ENCODE measurements at regions of chr5 and their contacts with region 1.

Region 1: GRCh38 chr5:142874537-142874936 is 104.4 kb downstream of the ARHGAP26 start:
- DNase-seq: peak in 1 of 2 donors; percentile 36
- ATAC-seq: peak; percentile 54 to 61
- H3K4me3 ChIP-seq: no peak overlapping the region
- H3K27ac ChIP-seq: peak overlapping the region in 3 of 4 donors; percentile 5 to 38 (median 23)
- H3K4me1 ChIP-seq: peaks cover 5 to 21% of the 10 kb centered on the region in 2 donors
- H3K27me3 ChIP-seq: no peaks in the 10 kb centered on the region
- CTCF ChIP-seq: no peak
- POLR2A ChIP-seq: no peak

Region 2: GRCh38 chr5:142726188-142726731 is 148.3 kb before region 1 on chr5:
- in situ Hi-C with region 1: loop called in 1 of 4 experiments (anchors 10 kb)
- intact Hi-C with region 1: no loop called
- DNase-seq: no peak
- ATAC-seq: peak; percentile 92 to 93
- H3K4me3 ChIP-seq: no peak overlapping the region
- H3K27ac ChIP-seq: peak overlapping the region in 3 of 4 donors; percentile 21 to 44 (median 23)
- H3K4me1 ChIP-seq: peaks cover 2 to 14% of the 10 kb centered on the region in 2 donors
- H3K27me3 ChIP-seq: no peaks in the 10 kb centered on the region
- CTCF ChIP-seq: no peak
- POLR2A ChIP-seq: no peak

Region 3: GRCh38 chr5:142748568-142749249 is 125.8 kb before region 1 on chr5:
- in situ Hi-C with region 1: loop called (anchors 10 kb)
- intact Hi-C with region 1: no loop called
- DNase-seq: peak in 1 of 2 donors; percentile 11
- ATAC-seq: peak in 1 of 2 donors; percentile 39
- H3K4me3 ChIP-seq: no peak overlapping the region
- H3K27ac ChIP-seq: no peak overlapping the region
- H3K4me1 ChIP-seq: peaks cover 20 to 29% of the 10 kb centered on the region in 2 donors
- H3K27me3 ChIP-seq: no peaks in the 10 kb centered on the region
- CTCF ChIP-seq: peak; percentile 53 to 83 (median 77)
- POLR2A ChIP-seq: no peak

Measured in gastrocnemius medialis (tissue), 4 donors.